Natural killer cell (primary cell): ENCODE measurements at regions of chr4 and their contacts with region 1.

Region 1: GRCh38 chr4:116585246-116585645 is 500.1 kb downstream of the TRAM1L1 start:
- DNase-seq: no peak
- ATAC-seq: no peak
- H3K4me3 ChIP-seq: no peak overlapping the region
- H3K4me3 Mint-ChIP-seq: no peak overlapping the region
- H3K27ac ChIP-seq: no peak overlapping the region
- H3K27ac Mint-ChIP-seq: no peak overlapping the region
- H3K4me1 ChIP-seq: no peaks in the 10 kb centered on the region
- H3K4me1 Mint-ChIP-seq: no peaks in the 10 kb centered on the region
- H3K27me3 ChIP-seq: no peaks in the 10 kb centered on the region
- H3K27me3 Mint-ChIP-seq: no peaks in the 10 kb centered on the region
- CTCF ChIP-seq: no peak

Region 2: DNA sequence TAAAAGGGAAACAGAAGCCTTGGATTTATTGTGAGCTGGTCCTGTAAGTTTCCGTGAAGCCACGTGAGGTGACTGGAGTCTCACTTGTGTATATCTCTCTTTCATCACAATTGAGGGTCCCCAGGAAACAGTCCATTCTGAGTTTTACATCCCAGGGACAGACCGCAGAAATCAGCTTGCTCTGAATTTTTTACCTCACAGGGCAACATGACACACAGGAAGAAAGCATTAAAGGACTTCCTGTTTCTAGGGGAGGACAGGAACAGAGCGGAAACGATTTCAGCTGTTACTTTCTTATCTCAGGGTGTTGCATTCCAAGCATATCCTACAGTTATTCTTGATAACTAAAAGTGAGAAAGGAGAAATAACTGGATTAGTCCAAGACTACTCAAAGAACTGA is 53.4 kb before region 1 on chr4:
- intact Hi-C with region 1: loop called (anchors 5 kb)
- DNase-seq: no peak
- ATAC-seq: no peak
- H3K4me3 ChIP-seq: no peak overlapping the region
- H3K4me3 Mint-ChIP-seq: no peak overlapping the region
- H3K27ac ChIP-seq: no peak overlapping the region
- H3K27ac Mint-ChIP-seq: no peak overlapping the region
- H3K4me1 ChIP-seq: no peaks in the 10 kb centered on the region
- H3K4me1 Mint-ChIP-seq: no peaks in the 10 kb centered on the region
- H3K27me3 ChIP-seq: no peaks in the 10 kb centered on the region
- H3K27me3 Mint-ChIP-seq: no peaks in the 10 kb centered on the region
- CTCF ChIP-seq: no peak

Region 3: GRCh38 chr4:116688536-116688935 is 103.3 kb after region 1 on chr4:
- intact Hi-C with region 1: no loop called
- DNase-seq: no peak
- ATAC-seq: no peak
- H3K4me3 ChIP-seq: no peak overlapping the region
- H3K4me3 Mint-ChIP-seq: no peak overlapping the region
- H3K27ac ChIP-seq: no peak overlapping the region
- H3K27ac Mint-ChIP-seq: no peak overlapping the region
- H3K4me1 ChIP-seq: no peaks in the 10 kb centered on the region
- H3K4me1 Mint-ChIP-seq: no peaks in the 10 kb centered on the region
- H3K27me3 ChIP-seq: no peaks in the 10 kb centered on the region
- H3K27me3 Mint-ChIP-seq: no peaks in the 10 kb centered on the region
- CTCF ChIP-seq: no peak